Panc1 (cell line): ENCODE measurements at regions of chr11 and their contacts with region 1.

Region 1: DNA sequence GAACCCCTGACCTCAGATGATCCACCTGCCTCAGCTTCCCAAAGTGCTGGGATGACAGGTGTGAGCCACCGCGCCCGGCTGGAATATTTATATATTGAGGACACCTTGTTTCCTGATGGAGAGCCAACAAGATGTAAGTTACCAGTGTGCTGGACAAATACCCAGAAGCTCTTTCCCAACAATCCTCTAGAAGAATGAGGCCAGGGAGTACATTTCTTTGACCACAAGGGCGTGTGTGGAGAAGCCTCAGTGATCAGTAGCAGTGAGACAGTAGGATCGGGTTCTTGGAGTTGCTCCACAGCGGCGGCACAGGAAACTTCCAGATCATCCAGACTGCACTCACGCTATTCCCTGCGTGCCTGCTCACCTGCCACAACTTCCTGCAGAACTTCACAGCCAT is 10.3 kb upstream of the POLA2 start:
- DNase-seq: no peak
- ATAC-seq: no peak
- H3K4me3 ChIP-seq: no peak overlapping the region
- H3K27ac ChIP-seq: no peak overlapping the region
- H3K4me1 ChIP-seq: no peaks in the 10 kb centered on the region
- H3K27me3 ChIP-seq: no peaks in the 10 kb centered on the region
- CTCF ChIP-seq: no peak

Region 2: GRCh38 chr11:65095974-65096806 is 155.3 kb before region 1 on chr11 and contains the start of gene VPS51:
- CTCF ChIA-PET with region 1: no interaction called
- POLR2A ChIA-PET with region 1: no interaction called
- in situ Hi-C with region 1: no loop called
- intact Hi-C with region 1: no loop called
- DNase-seq: no peak
- ATAC-seq: peak; percentile 97
- H3K4me3 ChIP-seq: peak within 1 kb of the TSS; percentile 63 to 88
- H3K27ac ChIP-seq: peak within 1 kb of the TSS; percentile 80
- H3K4me1 ChIP-seq: peaks cover 5% of the 10 kb centered on the region
- H3K27me3 ChIP-seq: no peaks in the 10 kb centered on the region
- CTCF ChIP-seq: no peak
- total RNA-seq, gene VPS51: 101 TPM

Region 3: DNA sequence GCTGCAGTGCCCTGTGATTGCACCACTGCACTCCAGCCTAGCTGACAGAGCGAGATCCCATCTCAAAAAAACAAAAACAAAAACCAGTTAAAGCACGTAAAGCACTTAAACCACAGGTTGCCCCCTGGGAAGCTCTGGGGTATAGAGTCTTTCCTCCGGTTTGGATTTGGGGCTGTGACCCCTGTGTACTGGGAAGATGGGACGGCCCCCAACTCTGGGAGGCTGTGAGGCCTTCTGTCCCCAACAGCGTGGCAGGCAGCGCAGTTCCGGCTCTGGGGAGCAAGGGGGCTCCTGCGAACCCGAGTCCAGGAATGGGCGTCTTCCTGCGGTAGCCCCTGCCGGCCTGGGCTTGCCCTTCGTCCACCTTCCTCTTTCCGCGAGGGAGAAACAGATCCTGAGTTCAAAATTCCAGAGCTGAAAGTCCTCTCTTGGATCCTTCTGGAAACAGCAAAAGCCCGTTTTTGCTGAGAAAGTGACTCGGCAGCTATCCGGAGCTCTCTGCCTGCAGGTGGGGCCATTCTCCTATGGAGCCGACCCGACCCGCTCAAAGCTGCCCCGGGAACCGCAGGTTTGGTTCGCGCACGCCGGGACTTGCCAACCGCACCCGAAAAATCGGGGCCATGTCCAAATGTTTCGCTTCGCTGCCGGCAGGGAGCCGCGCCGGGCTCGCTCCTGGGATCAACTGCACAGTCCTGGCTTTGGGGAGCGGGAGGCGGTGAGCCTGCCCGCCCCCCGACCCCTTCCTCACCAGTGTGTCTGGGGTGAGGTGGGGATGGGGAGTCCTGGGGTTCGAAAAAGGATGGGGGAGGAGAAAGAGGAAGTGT is 26.0 kb before region 1 on chr11:
- CTCF ChIA-PET with region 1: interaction called, 7 read pairs
- POLR2A ChIA-PET with region 1: no interaction called
- in situ Hi-C with region 1: no loop called
- intact Hi-C with region 1: loop called (anchors 1 kb)
- DNase-seq: peak; percentile 27
- ATAC-seq: peak; percentile 91
- H3K4me3 ChIP-seq: peak overlapping the region; percentile 38 to 61
- H3K27ac ChIP-seq: peak overlapping the region; percentile 65
- H3K4me1 ChIP-seq: peaks cover 7% of the 10 kb centered on the region
- H3K27me3 ChIP-seq: no peaks in the 10 kb centered on the region
- CTCF ChIP-seq: peak; percentile 92

Region 4: DNA sequence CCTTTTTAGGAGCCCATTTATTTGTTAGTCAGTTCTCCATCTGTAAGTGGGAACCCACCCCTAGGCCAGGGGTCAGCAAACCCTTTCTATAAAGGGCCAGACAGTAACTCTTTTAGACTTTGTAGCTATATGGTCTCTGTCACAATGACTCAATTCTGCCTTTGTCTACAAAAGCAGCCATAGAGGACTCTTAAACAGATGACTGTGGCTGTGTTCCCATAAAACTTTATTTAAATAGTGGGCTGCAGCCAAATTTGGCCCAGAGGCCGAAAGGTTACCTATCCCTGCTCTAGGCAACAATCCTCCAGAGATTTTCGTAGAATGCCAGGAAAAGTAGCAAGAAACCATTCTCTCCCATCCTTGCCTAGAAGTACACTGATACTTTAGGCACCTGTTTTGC is 30.3 kb after region 1 on chr11:
- CTCF ChIA-PET with region 1: no interaction called
- POLR2A ChIA-PET with region 1: no interaction called
- in situ Hi-C with region 1: no loop called
- intact Hi-C with region 1: no loop called
- DNase-seq: no peak
- ATAC-seq: no peak
- H3K4me3 ChIP-seq: no peak overlapping the region
- H3K27ac ChIP-seq: no peak overlapping the region
- H3K4me1 ChIP-seq: peaks cover 16% of the 10 kb centered on the region; the same call in 1 of the 2 replicates
- H3K27me3 ChIP-seq: no peaks in the 10 kb centered on the region
- CTCF ChIP-seq: no peak

Region 5: DNA sequence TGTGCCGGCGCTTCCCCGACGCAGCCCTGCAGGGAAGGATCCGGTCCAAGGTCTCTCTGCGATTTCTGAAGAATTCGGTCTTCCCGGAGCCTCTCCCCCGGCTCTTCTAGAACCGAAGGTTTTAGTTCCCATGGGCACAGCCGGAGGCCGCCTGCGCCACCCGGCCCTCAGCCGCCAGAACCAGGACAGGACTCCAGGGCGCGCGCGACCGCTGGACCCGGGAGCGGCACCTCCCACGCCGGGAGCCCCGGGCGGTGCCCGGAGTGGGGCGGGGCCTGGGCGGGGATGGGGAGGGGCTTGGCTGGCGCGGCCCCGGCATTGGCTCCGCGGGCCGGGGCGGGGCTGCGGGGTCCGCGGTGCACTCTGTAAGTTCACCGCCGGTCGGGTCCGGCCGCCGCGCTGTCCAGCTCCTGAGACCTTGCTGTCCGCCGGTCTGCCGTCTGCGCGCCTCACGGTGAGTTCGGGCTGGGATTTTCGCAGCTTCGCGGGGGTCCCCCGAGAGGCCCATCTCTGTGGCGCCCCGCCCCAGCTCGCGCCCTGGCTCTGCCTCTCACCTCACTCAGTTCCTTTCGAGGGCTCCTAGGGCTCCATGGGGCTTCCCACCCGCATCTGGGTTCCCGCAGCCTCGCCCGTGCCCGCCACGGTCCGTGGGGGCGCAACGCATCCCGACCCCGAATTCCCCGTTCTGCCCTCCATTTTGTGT is 63.2 kb after region 1 on chr11 and contains the start of gene CDC42EP2:
- CTCF ChIA-PET with region 1: no interaction called
- POLR2A ChIA-PET with region 1: no interaction called
- in situ Hi-C with region 1: no loop called
- intact Hi-C with region 1: no loop called
- DNase-seq: no peak
- ATAC-seq: peak; percentile 88
- H3K4me3 ChIP-seq: peak within 1 kb of the TSS; percentile 74 to 75
- H3K27ac ChIP-seq: peak within 1 kb of the TSS; percentile 76
- H3K4me1 ChIP-seq: peaks cover 22% of the 10 kb centered on the region
- H3K27me3 ChIP-seq: no peaks in the 10 kb centered on the region
- CTCF ChIP-seq: no peak
- total RNA-seq, gene CDC42EP2: 8.1 TPM

Region 6: GRCh38 chr11:65594299-65594582 is 342.8 kb after region 1 on chr11:
- CTCF ChIA-PET with region 1: interaction called, 16 read pairs
- POLR2A ChIA-PET with region 1: no interaction called
- in situ Hi-C with region 1: no loop called
- intact Hi-C with region 1: no loop called
- DNase-seq: no peak
- ATAC-seq: no peak
- H3K4me3 ChIP-seq: no peak overlapping the region
- H3K27ac ChIP-seq: no peak overlapping the region
- H3K4me1 ChIP-seq: peaks cover 12% of the 10 kb centered on the region; the same call in 1 of the 2 replicates
- H3K27me3 ChIP-seq: no peaks in the 10 kb centered on the region
- CTCF ChIP-seq: no peak